Activated naive CD4-positive, alpha-beta T cell treated with anti-CD3 and anti-CD28 coated beads for 36 hours (primary cell): ENCODE measurements at regions of chr6 and their contacts with region 1.

Region 1: DNA sequence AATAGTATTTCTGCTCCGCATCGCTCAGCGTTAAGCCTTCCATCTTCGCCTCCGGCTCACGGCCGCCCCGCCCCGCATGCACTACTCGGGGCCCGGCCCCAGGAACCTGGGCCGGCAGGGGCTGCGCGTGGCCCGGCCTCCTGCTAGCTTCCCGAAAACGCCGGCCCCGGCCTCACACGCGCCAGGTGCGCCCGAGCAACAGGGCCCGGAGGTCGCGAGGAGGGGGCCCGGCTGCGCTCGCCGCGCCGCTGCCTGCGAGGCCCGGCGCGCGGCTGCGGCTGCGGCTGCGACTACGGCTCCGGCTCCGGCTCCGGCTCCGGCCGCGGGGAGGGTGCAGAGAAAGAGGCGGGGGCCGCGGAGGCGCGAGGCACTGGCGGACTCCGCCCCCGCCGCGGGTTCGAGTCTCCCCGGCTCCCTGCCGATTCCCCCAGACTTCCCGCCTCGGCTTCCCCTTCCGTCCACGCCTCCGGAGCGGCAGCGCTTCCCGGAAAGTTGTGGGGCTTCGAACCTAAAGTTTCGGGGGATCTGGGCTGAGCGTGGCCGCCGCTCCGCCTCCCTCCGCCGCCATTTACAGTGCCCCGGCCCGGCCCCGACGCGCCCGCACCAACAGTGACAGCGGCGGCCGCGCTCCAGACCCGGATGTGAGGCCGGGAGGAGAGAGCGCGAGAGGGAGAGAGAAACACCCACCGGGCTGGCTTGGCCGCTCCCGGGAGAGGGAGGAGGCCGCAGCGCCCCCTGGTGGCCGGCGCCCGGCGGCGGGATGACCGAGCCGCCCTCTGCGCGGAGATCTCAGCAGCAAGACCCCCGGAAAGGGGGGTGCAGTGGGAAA is at the start of gene REPS1:
- DNase-seq: peak; percentile 92
- H3K4me3 Mint-ChIP-seq: peak within 1 kb of the TSS; percentile 86
- H3K27ac Mint-ChIP-seq: peak within 1 kb of the TSS; percentile 89
- H3K4me1 Mint-ChIP-seq: peaks cover 4% of the 10 kb centered on the region
- H3K27me3 Mint-ChIP-seq: no peaks in the 10 kb centered on the region
- total RNA-seq, gene REPS1: 25.8 to 28.8 TPM

Region 2: GRCh38 chr6:138692058-138692977 is 295.5 kb before region 1 on chr6:
- CTCF ChIA-PET with region 1: no interaction called
- intact Hi-C with region 1: loop called (anchors 2 kb)
- DNase-seq: peak; percentile 50
- H3K4me3 Mint-ChIP-seq: peak overlapping the region; percentile 79
- H3K27ac Mint-ChIP-seq: no peak overlapping the region
- H3K4me1 Mint-ChIP-seq: peaks cover 5% of the 10 kb centered on the region
- H3K27me3 Mint-ChIP-seq: peaks cover 32% of the 10 kb centered on the region

Region 3: GRCh38 chr6:138817822-138818308 is 170.0 kb before region 1 on chr6:
- CTCF ChIA-PET with region 1: interaction called, 40 read pairs
- intact Hi-C with region 1: loop called (anchors 1 kb)
- DNase-seq: peak; percentile 8
- H3K4me3 Mint-ChIP-seq: no peak overlapping the region
- H3K27ac Mint-ChIP-seq: no peak overlapping the region
- H3K4me1 Mint-ChIP-seq: peaks cover 20% of the 10 kb centered on the region
- H3K27me3 Mint-ChIP-seq: no peaks in the 10 kb centered on the region

Region 4: GRCh38 chr6:138837246-138837645 is 150.6 kb before region 1 on chr6:
- CTCF ChIA-PET with region 1: no interaction called
- intact Hi-C with region 1: no loop called
- DNase-seq: no peak
- H3K4me3 Mint-ChIP-seq: no peak overlapping the region
- H3K27ac Mint-ChIP-seq: no peak overlapping the region
- H3K4me1 Mint-ChIP-seq: no peaks in the 10 kb centered on the region
- H3K27me3 Mint-ChIP-seq: no peaks in the 10 kb centered on the region

Region 5: GRCh38 chr6:138896104-138896756 is 91.6 kb before region 1 on chr6:
- CTCF ChIA-PET with region 1: no interaction called
- intact Hi-C with region 1: no loop called
- DNase-seq: no peak
- H3K4me3 Mint-ChIP-seq: no peak overlapping the region
- H3K27ac Mint-ChIP-seq: no peak overlapping the region
- H3K4me1 Mint-ChIP-seq: peaks cover 4% of the 10 kb centered on the region
- H3K27me3 Mint-ChIP-seq: no peaks in the 10 kb centered on the region

Region 6: GRCh38 chr6:138944412-138944811 is 43.4 kb before region 1 on chr6:
- CTCF ChIA-PET with region 1: no interaction called
- intact Hi-C with region 1: loop called (anchors 2 kb)
- DNase-seq: peak; percentile 25
- H3K4me3 Mint-ChIP-seq: no peak overlapping the region
- H3K27ac Mint-ChIP-seq: no peak overlapping the region
- H3K4me1 Mint-ChIP-seq: peaks cover 29% of the 10 kb centered on the region
- H3K27me3 Mint-ChIP-seq: no peaks in the 10 kb centered on the region

Region 7: GRCh38 chr6:139028658-139029469 is 41.0 kb after region 1 on chr6 and contains the start of gene ABRACL:
- CTCF ChIA-PET with region 1: interaction called, 3 read pairs
- intact Hi-C with region 1: loop called (anchors 1 kb)
- DNase-seq: peak; percentile 92
- H3K4me3 Mint-ChIP-seq: no peak within 1 kb of the TSS
- H3K27ac Mint-ChIP-seq: peak within 1 kb of the TSS; percentile 95
- H3K4me1 Mint-ChIP-seq: peaks cover 18% of the 10 kb centered on the region
- H3K27me3 Mint-ChIP-seq: no peaks in the 10 kb centered on the region
- total RNA-seq, gene ABRACL: 185 to 190 TPM

Region 8: DNA sequence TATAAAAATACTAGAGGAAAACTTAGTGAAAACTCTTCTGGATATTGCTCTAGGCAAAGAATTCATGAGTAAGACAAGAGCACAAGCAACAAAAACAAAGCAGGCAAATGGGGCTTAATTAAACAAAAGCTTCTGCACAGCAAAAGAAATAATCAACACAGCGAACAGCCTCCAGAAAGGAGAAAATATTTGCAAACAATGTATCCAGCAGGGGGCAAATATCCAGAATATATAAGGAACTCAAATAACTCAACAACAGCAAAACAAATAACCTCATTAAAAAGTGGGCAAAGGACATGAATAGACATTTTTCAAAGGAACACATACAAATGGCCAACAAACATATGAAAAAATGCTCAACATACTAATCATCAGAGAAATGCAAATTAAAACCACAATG is 129.9 kb after region 1 on chr6:
- CTCF ChIA-PET with region 1: no interaction called
- intact Hi-C with region 1: loop called (anchors 1 kb)
- DNase-seq: no peak
- H3K4me3 Mint-ChIP-seq: no peak overlapping the region
- H3K27ac Mint-ChIP-seq: peak overlapping the region; percentile 25
- H3K4me1 Mint-ChIP-seq: peaks cover 48% of the 10 kb centered on the region
- H3K27me3 Mint-ChIP-seq: no peaks in the 10 kb centered on the region

Region 9: DNA sequence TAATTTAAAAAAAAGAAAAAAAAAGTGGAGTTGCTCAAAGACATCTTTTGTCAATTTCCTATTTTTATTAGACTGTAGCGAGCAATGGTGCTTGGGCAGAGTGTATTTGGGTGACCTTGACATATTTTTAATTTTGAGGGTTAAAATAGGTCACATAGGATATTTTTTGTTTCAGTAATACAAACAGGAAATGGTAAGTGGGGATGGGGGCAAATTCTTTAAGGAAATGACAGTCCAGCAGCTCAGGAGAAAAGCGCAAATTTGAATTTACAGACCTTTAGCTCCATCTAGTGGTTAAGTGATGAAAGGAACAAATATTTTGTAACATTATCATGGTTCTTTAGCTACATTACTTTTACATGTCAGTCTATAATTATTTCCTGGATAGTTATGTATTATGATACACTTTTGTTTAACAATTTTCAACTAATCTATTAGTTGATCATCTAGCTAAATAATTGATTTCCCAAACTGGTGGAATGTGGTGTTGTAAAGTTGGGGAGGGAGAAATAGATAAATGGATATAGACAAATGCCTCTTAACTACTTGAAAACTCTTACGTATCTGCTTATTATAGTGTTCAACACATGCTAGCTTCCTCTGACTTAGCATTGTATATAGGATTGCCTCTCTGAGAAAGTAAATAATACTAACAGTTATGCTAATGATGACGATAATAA is 376.6 kb after region 1 on chr6:
- CTCF ChIA-PET with region 1: interaction called, 5 read pairs
- intact Hi-C with region 1: loop called (anchors 2 kb)
- DNase-seq: no peak
- H3K4me3 Mint-ChIP-seq: no peak overlapping the region
- H3K27ac Mint-ChIP-seq: no peak overlapping the region
- H3K4me1 Mint-ChIP-seq: peaks cover 26% of the 10 kb centered on the region
- H3K27me3 Mint-ChIP-seq: no peaks in the 10 kb centered on the region